ENCODE measurements at regions of chr1 and their contacts with region 1.

Region 1: GRCh38 chr1:213015099-213016050 is at the start of gene ANGEL2:
- DNase-seq: peak; percentile 82
- H3K4me3 ChIP-seq: peak within 1 kb of the TSS; percentile 83
- CTCF ChIP-seq: no peak

Region 2: GRCh38 chr1:213003256-213003655 is 12.1 kb before region 1 on chr1:
- CTCF ChIA-PET with region 1: interaction called, 10 read pairs
- POLR2A ChIA-PET with region 1: interaction called, 3 read pairs
- DNase-seq: no peak
- H3K4me3 ChIP-seq: no peak overlapping the region
- CTCF ChIP-seq: no peak

Measured in AG04449 (cell line).